ENCODE measurements at regions of chr11 and their contacts with region 1.

Region 1: GRCh38 chr11:19311308-19312030 is 70.7 kb upstream of the E2F8 start:
- DNase-seq: peak; percentile 33
- ATAC-seq: no peak
- H3K4me3 ChIP-seq: no peak overlapping the region
- H3K4me3 Mint-ChIP-seq: no peak overlapping the region
- H3K27ac ChIP-seq: no peak overlapping the region
- H3K27ac Mint-ChIP-seq: no peak overlapping the region
- H3K4me1 ChIP-seq: peaks cover 0 to 5% of the 10 kb centered on the region in 2 donors
- H3K4me1 Mint-ChIP-seq: peaks cover 7% of the 10 kb centered on the region
- H3K27me3 ChIP-seq: peaks cover 0 to 3% (median 0%) of the 10 kb centered on the region in 4 experiments
- H3K27me3 Mint-ChIP-seq: peaks cover 20% of the 10 kb centered on the region
- CTCF ChIP-seq: peak; percentile 62

Region 2: DNA sequence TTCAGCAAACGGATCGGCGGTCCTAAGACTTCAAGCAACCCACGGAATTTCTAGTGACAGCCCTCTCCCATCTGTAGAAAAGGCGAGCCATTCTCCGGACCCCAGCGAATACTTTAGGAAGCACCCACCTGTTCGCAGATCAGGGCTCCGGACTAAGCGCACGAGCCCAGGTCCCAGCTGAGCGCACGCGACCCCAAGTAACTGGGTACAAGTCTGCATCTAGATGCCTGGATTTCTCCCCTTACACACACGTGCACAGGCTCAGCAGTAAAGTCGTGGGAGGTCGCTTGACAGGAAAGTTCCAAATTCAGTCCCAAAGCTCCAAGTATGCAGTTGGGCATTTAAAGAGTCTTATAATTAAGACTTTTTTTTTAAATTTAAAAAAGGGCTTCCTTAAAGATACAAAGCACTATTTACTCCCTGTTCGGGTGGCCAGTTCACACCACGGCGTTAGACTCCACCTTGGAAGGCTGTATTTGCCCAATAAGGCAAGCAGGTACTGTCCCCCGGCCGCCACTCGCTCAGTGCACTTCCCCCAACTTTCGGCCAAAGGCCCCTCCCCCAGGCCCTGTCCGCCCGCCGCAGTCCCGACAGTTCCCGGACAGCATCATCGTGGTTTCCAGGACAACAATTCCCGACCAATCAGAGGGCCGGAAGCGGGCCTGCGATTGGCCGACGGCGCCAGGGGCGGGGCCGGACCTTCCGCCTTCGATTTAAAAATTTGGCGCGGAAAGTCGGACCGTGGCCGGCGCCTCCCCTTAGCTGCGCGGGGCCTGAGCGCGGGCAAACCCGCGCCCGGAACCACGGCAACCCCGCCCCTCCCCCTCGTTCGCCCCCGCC is 70.8 kb before region 1 on chr11 and contains the start of gene E2F8:
- CTCF ChIA-PET with region 1: no interaction called
- POLR2A ChIA-PET with region 1: no interaction called
- intact Hi-C with region 1: no loop called
- DNase-seq: peak; percentile 87
- ATAC-seq: peak; percentile 95
- H3K4me3 ChIP-seq: peak within 1 kb of the TSS; percentile 49 to 91 (median 66)
- H3K4me3 Mint-ChIP-seq: peak within 1 kb of the TSS; percentile 96
- H3K27ac ChIP-seq: no peak within 1 kb of the TSS
- H3K27ac Mint-ChIP-seq: peak within 1 kb of the TSS; percentile 73
- H3K4me1 ChIP-seq: peaks cover 20 to 22% of the 10 kb centered on the region in 2 donors
- H3K4me1 Mint-ChIP-seq: peaks cover 20% of the 10 kb centered on the region
- H3K27me3 ChIP-seq: peaks cover 0 to 44% (median 27%) of the 10 kb centered on the region in 4 experiments
- H3K27me3 Mint-ChIP-seq: peaks cover 37% of the 10 kb centered on the region
- CTCF ChIP-seq: no peak
- total RNA-seq, gene E2F8: 0.22 TPM in 1 of 2 replicates, not detected in the other

Region 3: GRCh38 chr11:19290356-19290755 is 21.1 kb before region 1 on chr11:
- CTCF ChIA-PET with region 1: no interaction called
- POLR2A ChIA-PET with region 1: no interaction called
- intact Hi-C with region 1: no loop called
- DNase-seq: no peak
- ATAC-seq: no peak
- H3K4me3 ChIP-seq: no peak overlapping the region
- H3K4me3 Mint-ChIP-seq: no peak overlapping the region
- H3K27ac ChIP-seq: no peak overlapping the region
- H3K27ac Mint-ChIP-seq: no peak overlapping the region
- H3K4me1 ChIP-seq: no peaks in the 10 kb centered on the region
- H3K4me1 Mint-ChIP-seq: no peaks in the 10 kb centered on the region
- H3K27me3 ChIP-seq: no peaks in the 10 kb centered on the region
- H3K27me3 Mint-ChIP-seq: peaks cover 14% of the 10 kb centered on the region
- CTCF ChIP-seq: no peak

Region 4: GRCh38 chr11:19553683-19554333 is 242.3 kb after region 1 on chr11:
- CTCF ChIA-PET with region 1: no interaction called
- POLR2A ChIA-PET with region 1: no interaction called
- intact Hi-C with region 1: loop called (anchors 1 kb)
- DNase-seq: peak; percentile 68
- ATAC-seq: peak; percentile 36
- H3K4me3 ChIP-seq: no peak overlapping the region
- H3K4me3 Mint-ChIP-seq: no peak overlapping the region
- H3K27ac ChIP-seq: no peak overlapping the region
- H3K27ac Mint-ChIP-seq: no peak overlapping the region
- H3K4me1 ChIP-seq: peaks cover 0 to 4% of the 10 kb centered on the region in 2 donors
- H3K4me1 Mint-ChIP-seq: peaks cover 1% of the 10 kb centered on the region
- H3K27me3 ChIP-seq: peaks cover 0 to 7% (median 1%) of the 10 kb centered on the region in 4 experiments
- H3K27me3 Mint-ChIP-seq: peaks cover 8% of the 10 kb centered on the region
- CTCF ChIP-seq: peak; percentile 84

Measured in B cell (primary cell).